Activated CD4-positive, alpha-beta T cell treated with anti-CD3 and anti-CD28 coated beads for 36 hours (primary cell): ENCODE measurements at regions of chr10 and their contacts with region 1.

Region 1: DNA sequence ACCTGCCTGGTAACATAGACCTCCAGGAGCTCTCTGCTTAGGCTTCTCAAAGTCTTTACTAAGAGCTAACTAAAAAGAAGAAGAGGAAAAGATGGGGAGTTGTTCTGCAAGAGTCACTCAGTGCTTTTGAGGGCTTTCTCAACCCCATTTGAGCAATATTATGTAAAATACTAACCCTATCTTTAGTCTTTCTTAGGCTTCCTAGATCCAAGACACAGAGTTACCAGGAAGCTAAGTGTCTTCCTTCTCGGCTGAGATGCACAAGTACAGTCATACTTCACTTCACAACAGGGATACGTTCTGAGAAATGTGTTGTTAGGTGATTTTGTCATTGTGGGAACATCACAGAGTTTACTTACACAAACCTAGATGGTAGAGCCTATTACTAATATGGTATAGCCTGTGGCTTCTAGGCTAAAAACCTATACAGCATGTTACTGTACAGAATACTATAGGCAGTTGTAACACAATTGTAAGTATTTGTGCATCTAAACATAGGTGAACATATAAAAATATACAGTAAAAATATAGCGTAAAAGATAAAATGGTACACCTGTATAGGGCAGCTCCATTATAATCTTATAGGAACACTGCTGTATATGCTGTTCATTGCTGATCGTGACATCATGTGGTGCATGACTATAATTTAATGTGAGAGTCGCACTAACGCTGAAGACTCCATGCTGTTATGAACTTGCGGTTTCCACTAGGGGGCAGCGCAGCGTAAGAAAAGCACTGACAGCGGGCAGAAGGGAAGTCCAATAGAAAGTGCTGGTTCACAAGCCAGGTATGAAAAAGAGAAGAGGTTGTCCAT is 16.3 kb downstream of the ANKRD22 start:
- DNase-seq: peak; percentile 93
- ATAC-seq: peak; percentile 90
- H3K4me3 Mint-ChIP-seq: no peak overlapping the region
- H3K27ac Mint-ChIP-seq: no peak overlapping the region
- H3K4me1 Mint-ChIP-seq: peaks cover 28% of the 10 kb centered on the region
- H3K27me3 Mint-ChIP-seq: no peaks in the 10 kb centered on the region

Region 2: DNA sequence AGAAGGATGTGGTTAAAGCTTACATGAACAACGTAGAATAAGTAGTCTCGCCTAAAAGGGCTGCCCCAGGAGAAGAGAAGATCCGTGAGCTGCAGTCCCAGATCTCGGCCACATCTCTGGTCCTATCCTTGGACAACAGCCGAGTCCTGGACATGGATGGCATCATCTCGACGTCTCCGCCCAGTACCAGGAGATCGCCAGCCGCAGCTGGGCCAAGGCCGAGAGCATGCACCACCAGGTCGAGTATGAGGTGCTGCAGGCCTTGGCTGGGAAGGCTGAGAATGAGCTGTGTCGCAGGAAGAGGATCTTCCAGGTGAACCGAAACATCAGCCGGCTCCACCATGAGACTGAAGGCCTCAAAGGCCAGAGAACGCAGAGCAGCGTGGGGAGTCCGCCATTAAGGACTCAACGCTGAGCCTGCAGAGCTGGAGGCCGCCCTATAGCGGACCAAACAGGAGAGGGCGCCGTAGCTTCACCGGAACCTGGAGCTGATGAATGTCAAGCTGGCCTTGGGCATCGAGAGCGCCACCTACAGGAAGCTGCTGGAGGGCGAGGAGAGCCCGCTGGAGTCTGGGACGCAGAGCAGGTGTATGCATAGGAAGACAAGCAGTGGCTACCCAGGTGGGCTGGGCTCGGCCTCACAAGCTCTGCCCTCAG is 107.1 kb before region 1 on chr10:
- CTCF ChIA-PET with region 1: interaction called, 13 read pairs
- POLR2A ChIA-PET with region 1: no interaction called
- intact Hi-C with region 1: no loop called
- DNase-seq: peak; percentile 85
- ATAC-seq: peak; percentile 64
- H3K4me3 Mint-ChIP-seq: no peak overlapping the region
- H3K27ac Mint-ChIP-seq: no peak overlapping the region
- H3K4me1 Mint-ChIP-seq: peaks cover 6% of the 10 kb centered on the region
- H3K27me3 Mint-ChIP-seq: peaks cover 2% of the 10 kb centered on the region

Region 3: DNA sequence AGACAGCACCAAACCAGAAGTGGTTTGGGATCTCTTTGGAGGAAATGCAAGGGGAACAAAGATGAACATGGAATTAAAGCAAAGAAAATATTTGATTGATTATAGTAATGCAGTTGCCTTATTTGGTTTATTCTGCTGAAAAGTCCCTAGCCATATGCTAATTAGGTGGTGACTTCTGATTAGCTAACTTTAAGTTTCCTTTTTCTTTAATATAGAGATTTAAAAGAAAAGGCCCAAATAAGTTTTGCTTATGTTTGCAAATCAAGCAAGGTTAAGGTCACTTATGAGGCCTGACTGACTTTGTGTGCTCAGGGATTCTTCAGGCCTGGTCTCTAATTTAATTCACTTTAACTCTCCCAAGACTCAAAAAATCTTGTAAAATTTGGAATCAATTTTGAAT is 22.5 kb after region 1 on chr10:
- CTCF ChIA-PET with region 1: interaction called, 20 read pairs
- POLR2A ChIA-PET with region 1: no interaction called
- intact Hi-C with region 1: no loop called
- DNase-seq: no peak
- ATAC-seq: no peak
- H3K4me3 Mint-ChIP-seq: no peak overlapping the region
- H3K27ac Mint-ChIP-seq: no peak overlapping the region
- H3K4me1 Mint-ChIP-seq: peaks cover 6% of the 10 kb centered on the region
- H3K27me3 Mint-ChIP-seq: peaks cover 12% of the 10 kb centered on the region

Region 4: GRCh38 chr10:88901206-88901983 is 66.1 kb after region 1 on chr10:
- CTCF ChIA-PET with region 1: interaction called, 50 read pairs
- POLR2A ChIA-PET with region 1: no interaction called
- intact Hi-C with region 1: no loop called
- DNase-seq: no peak
- ATAC-seq: peak; percentile 75
- H3K4me3 Mint-ChIP-seq: peak overlapping the region; percentile 26
- H3K27ac Mint-ChIP-seq: peak overlapping the region; percentile 90
- H3K4me1 Mint-ChIP-seq: peaks cover 60% of the 10 kb centered on the region
- H3K27me3 Mint-ChIP-seq: no peaks in the 10 kb centered on the region

Region 5: GRCh38 chr10:88926566-88927415 is 91.5 kb after region 1 on chr10:
- CTCF ChIA-PET with region 1: interaction called, 217 read pairs
- POLR2A ChIA-PET with region 1: interaction called, 5 read pairs
- intact Hi-C with region 1: no loop called
- DNase-seq: no peak
- ATAC-seq: no peak
- H3K4me3 Mint-ChIP-seq: no peak overlapping the region
- H3K27ac Mint-ChIP-seq: no peak overlapping the region
- H3K4me1 Mint-ChIP-seq: peaks cover 3% of the 10 kb centered on the region
- H3K27me3 Mint-ChIP-seq: no peaks in the 10 kb centered on the region

Region 6: GRCh38 chr10:89207181-89207800 is 372.0 kb after region 1 on chr10 and contains the start of gene CH25H:
- CTCF ChIA-PET with region 1: interaction called, 12 read pairs
- POLR2A ChIA-PET with region 1: no interaction called
- intact Hi-C with region 1: no loop called
- DNase-seq: peak; percentile 76
- ATAC-seq: peak; percentile 76
- H3K4me3 Mint-ChIP-seq: peak within 1 kb of the TSS; percentile 69
- H3K27ac Mint-ChIP-seq: no peak within 1 kb of the TSS
- H3K4me1 Mint-ChIP-seq: peaks cover 10% of the 10 kb centered on the region
- H3K27me3 Mint-ChIP-seq: peaks cover 35% of the 10 kb centered on the region
- total RNA-seq, gene CH25H: not detected